Vagina (tissue), 2 donors: ENCODE measurements at regions of chr3 and their contacts with region 1.

Region 1: GRCh38 chr3:141876381-141876890 is at the start of gene ATP1B3:
- DNase-seq: peak in 1 of 2 donors; percentile 89
- H3K4me3 ChIP-seq: peak within 1 kb of the TSS; percentile 82 to 97
- H3K27ac ChIP-seq: peak within 1 kb of the TSS; percentile 100
- H3K4me1 ChIP-seq: peaks cover 37% of the 10 kb centered on the region
- H3K27me3 ChIP-seq: no peaks in the 10 kb centered on the region
- CTCF ChIP-seq: no peak
- POLR2A ChIP-seq: peak in 1 of 2 donors; percentile 89
- total RNA-seq, gene ATP1B3: 88.1 TPM

Region 2: GRCh38 chr3:141738022-141738890 is 138.2 kb before region 1 on chr3 and contains the start of gene RNF7:
- intact Hi-C with region 1: loop called (anchors 2 kb)
- DNase-seq: peak in 1 of 2 donors; percentile 96
- H3K4me3 ChIP-seq: peak within 1 kb of the TSS; percentile 71 to 96
- H3K27ac ChIP-seq: peak within 1 kb of the TSS; percentile 97
- H3K4me1 ChIP-seq: peaks cover 38% of the 10 kb centered on the region
- H3K27me3 ChIP-seq: no peaks in the 10 kb centered on the region
- CTCF ChIP-seq: peak; percentile 73 to 93 (median 87)
- POLR2A ChIP-seq: peak; percentile 31 to 47
- total RNA-seq, gene RNF7: 57.0 TPM